BJ (cell line): ENCODE measurements at regions of chr4 and their contacts with region 1.

Region 1: DNA sequence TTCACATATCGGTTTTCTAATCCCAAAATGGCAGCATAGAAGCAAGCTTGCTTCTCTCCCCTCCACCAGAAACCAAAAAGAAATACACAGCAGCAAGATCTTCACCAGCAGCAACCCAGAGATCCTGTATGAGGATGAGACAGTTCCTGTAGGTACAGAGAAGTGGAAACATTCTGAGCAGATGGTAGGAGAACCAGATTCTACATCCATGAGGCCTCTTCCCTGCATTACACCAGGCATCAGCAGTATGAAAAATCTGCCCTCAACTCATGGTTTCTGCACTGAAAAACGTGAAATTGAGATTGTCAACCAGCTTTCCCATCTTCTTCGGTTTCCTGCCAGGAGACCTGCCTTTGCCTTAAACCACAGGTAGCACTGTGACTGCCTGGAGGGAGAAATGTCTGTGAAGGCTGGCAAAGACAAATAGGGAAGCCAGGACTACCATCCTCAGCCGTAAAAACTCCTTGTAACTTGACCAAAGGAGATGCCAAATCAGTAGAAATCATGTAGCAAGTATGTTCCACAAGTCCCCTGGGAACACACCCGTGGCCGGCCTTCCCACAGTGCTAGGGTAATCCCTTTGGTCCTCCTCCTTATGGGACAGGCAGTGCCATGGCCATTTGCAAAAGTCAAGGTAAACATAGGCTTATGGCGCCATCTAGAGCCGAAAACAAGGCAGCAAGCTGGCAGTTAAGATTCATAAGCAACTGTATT is 24.0 kb upstream of the MTHFD2L start:
- DNase-seq: no peak
- H3K4me3 ChIP-seq: no peak overlapping the region
- H3K27me3 ChIP-seq: no peaks in the 10 kb centered on the region
- CTCF ChIP-seq: peak; percentile 83

Region 2: DNA sequence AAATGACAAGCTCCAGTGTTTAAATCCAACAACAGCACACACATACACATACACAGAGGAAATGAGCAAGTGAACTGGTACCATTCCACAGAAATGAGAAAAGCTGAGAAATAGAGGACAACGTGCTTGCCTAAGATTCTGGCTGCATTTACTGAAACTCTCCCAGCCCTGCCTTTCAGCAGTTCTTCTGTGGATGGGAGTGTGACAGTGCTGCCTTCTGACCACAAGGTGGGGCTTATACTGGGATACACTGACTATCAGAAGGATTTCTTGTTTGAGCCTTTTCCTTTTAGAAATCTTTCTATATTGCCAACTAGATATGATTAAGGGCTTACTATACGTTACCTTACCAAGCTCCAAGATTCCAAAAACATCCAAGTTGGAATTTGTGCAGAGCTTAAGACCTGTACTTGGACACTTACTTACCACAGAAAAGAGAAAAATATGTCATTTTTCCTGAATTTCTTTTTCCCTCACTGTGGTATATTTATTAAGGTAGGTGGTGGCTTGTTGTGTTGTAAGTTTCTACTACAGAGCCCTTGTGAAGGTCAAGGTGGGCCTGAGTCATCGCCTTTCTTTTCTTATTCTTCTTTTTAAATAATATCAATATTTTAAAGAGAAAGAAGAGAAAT is 404.3 kb before region 1 on chr4:
- CTCF ChIA-PET with region 1: interaction called, 24 read pairs
- POLR2A ChIA-PET with region 1: no interaction called
- DNase-seq: no peak
- H3K4me3 ChIP-seq: no peak overlapping the region
- H3K27me3 ChIP-seq: no peaks in the 10 kb centered on the region
- CTCF ChIP-seq: peak; percentile 86

Region 3: DNA sequence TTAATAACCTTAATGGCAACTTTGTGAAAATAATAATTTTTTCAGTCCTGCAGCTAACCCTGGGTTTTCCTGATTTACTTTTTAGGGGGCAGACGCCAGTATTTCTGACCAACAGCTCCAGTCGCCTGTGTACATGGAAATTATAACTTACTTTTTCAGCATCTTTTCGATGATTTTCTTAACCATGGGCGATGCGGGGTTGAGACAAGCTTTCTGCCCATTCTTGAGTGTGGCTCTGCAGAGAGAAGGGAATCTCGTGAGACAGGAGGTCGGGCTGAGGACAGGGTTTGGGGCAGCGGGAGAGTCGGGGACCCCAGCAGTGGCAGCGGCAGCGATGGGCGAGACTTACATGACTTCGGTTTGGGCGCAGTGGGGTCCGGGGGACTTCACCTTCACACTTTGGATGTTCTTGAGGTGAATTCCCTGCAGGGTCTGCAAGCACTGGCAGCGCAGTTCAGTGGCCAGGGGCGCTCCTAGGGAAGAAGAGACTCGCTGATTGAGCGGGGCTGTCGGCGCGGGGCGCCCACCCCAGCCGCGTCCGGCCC is 35.4 kb before region 1 on chr4:
- CTCF ChIA-PET with region 1: interaction called, 11 read pairs
- POLR2A ChIA-PET with region 1: no interaction called
- DNase-seq: no peak
- H3K4me3 ChIP-seq: peak overlapping the region; percentile 64
- H3K27me3 ChIP-seq: no peaks in the 10 kb centered on the region
- CTCF ChIP-seq: peak; percentile 31

Region 4: DNA sequence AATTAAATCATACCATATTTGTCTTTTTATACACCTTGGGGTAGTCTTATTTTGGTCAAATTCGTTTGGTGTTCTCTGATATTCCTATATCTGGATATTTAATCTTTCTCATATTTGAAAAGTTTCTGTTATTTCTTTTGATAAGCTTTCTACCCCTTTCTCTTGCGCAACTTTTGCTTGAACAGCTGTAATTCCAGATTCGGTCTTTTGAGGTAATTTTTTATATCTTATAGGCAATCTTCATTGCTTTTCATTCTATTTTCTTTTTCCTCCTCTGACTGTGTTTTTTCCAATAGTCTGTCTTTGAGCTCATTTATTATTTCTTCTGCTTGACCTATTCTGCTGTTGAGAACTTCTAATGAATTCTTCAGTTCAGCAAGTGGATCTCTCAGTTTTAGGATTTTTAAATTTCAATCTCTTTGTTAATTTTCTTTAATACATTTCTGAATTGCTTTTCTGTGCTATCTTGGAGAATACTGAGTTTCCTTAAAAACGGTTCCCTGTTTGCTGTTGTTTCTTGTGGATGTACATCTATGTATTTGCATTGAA is 12.7 kb after region 1 on chr4:
- CTCF ChIA-PET with region 1: interaction called, 10 read pairs
- POLR2A ChIA-PET with region 1: no interaction called
- DNase-seq: no peak
- H3K4me3 ChIP-seq: no peak overlapping the region
- H3K27me3 ChIP-seq: no peaks in the 10 kb centered on the region
- CTCF ChIP-seq: no peak

Region 5: DNA sequence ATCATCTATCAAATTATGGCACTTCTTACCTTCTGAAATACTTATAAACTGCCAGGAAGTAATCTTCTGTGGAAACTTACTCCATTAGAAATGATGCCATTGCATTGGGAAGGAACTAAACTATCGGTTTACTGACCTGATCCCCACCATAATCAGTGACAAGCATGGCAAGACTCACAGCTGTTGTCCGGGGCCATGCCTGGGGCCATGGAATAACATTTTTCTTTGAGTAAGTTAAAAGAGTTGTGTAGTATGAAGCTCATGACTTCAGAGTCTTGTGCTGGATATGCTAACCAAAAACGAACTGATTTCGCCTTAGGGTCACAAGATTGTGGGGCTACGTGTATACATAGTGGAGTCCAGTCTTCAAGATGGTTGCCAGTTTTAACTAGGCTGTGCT is 39.4 kb after region 1 on chr4:
- CTCF ChIA-PET with region 1: no interaction called
- POLR2A ChIA-PET with region 1: no interaction called
- DNase-seq: no peak
- H3K4me3 ChIP-seq: no peak overlapping the region
- H3K27me3 ChIP-seq: no peaks in the 10 kb centered on the region
- CTCF ChIP-seq: no peak

Region 6: GRCh38 chr4:74189331-74190043 is 55.5 kb after region 1 on chr4:
- CTCF ChIA-PET with region 1: no interaction called
- POLR2A ChIA-PET with region 1: no interaction called
- DNase-seq: peak; percentile 7
- H3K4me3 ChIP-seq: no peak overlapping the region
- H3K27me3 ChIP-seq: no peaks in the 10 kb centered on the region
- CTCF ChIP-seq: peak; percentile 69

Region 7: GRCh38 chr4:74545488-74545887 is 411.5 kb after region 1 on chr4:
- CTCF ChIA-PET with region 1: no interaction called
- POLR2A ChIA-PET with region 1: no interaction called
- DNase-seq: no peak
- H3K4me3 ChIP-seq: no peak overlapping the region
- H3K27me3 ChIP-seq: no peaks in the 10 kb centered on the region
- CTCF ChIP-seq: no peak